AG04450 (cell line): ENCODE measurements at regions of chr9 and their contacts with region 1.

Region 1: DNA sequence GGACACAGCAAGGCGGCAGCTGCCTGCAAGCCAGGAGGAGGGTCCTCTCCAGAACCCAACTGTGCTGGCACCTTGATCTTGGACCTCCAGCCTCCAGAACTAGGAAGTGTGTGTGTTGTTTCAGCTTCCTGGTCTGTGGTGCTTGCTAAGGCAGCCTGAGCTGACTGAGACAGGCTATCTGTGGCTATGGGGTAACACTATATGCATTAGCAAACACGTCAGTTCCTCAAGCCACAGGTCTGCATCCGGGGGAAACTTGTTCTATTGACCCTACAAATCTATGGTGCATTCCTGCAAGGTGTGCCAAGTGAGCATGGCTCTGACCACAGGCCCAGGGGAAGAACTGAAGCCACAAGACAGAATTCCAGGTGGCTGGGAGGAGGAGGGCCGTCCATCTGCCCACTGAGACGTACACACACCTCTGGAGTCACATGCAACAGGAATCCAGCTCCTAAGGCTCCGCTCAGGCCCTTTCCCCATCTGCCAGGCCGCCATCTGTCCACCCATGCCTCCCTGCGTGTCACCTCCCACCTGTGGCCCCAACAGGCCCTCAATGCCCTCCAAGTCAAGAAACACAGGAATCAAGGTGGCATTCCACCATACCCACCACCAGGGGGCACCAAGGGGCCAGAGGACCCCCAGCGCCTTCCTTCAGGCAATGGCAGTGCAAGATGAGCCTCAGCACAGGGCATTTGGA is 174.9 kb downstream of the ROR2 start:
- DNase-seq: peak; percentile 26
- H3K4me3 ChIP-seq: no peak overlapping the region
- H3K27ac ChIP-seq: no peak overlapping the region
- H3K27me3 ChIP-seq: no peaks in the 10 kb centered on the region
- CTCF ChIP-seq: peak; percentile 87

Region 2: GRCh38 chr9:91758491-91758981 is 16.6 kb before region 1 on chr9:
- CTCF ChIA-PET with region 1: interaction called, 25 read pairs
- POLR2A ChIA-PET with region 1: no interaction called
- DNase-seq: no peak
- H3K4me3 ChIP-seq: no peak overlapping the region
- H3K27ac ChIP-seq: no peak overlapping the region
- H3K27me3 ChIP-seq: no peaks in the 10 kb centered on the region
- CTCF ChIP-seq: peak; percentile 80

Region 3: DNA sequence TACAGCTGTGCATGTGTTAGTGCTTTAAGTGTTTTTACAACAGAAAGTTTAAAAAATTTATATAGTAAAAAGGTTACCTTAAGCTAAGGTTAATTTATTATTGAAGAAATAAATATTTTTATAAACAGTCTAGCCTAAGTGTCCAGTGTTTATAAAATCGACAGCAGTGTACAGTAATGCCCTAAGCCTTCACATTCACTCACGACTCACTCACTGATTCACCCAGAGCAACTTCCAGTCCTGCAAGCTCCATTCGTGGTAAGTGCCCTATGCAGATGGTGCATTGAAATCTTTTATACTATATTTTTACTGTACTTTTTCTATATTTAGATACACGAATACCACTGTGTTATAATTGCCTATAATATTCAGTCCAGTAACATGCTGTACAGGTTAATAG is 15.8 kb after region 1 on chr9:
- CTCF ChIA-PET with region 1: interaction called, 3 read pairs
- POLR2A ChIA-PET with region 1: interaction called, 10 read pairs
- DNase-seq: no peak
- H3K4me3 ChIP-seq: no peak overlapping the region
- H3K27ac ChIP-seq: no peak overlapping the region
- H3K27me3 ChIP-seq: no peaks in the 10 kb centered on the region
- CTCF ChIP-seq: no peak